ENCODE measurements at regions of chr3 and their contacts with region 1.

Region 1: DNA sequence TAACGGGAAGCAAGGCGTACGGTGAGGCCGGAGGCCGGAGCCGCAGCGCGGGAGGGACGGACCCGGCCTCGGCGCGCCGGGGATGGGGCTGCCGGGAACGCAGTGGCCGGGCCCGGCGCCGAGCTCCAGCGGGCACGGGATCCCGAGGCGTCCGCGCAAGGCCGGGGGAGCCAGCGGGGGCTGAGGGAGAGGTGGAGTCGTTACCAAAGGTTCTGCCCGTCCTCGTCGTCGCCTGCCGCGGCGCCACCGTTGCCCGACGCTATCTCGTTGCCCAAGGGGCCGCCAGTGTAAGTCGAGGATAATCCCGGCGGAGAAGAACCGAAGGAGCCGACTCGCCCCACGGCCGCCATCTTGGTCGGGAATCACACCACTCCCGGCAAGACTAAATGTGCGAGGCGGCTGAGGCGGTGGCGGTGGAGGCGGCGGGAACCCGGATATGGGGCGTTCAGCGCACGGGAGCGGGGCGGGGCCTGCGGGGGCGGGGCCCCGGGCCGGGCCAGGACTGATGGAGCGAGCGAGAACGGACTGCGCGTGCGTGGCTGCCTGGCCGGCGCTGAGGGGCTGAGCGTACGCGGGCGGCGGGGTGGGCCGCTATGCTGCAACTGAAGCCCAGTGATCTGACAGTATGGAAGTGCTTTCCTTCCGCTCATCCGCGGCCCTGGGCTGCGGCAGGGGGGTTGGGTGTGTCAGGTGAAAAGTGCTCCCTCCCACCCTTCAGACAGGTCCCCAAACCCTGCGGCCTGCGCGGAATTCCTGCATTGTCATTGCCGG is at the start of gene DYNC1LI1:
- DNase-seq: peak; percentile 80
- ATAC-seq: peak; percentile 91
- H3K4me3 ChIP-seq: peak within 1 kb of the TSS; percentile 90 to 99 (median 97)
- H3K27ac ChIP-seq: peak within 1 kb of the TSS; percentile 97
- H3K4me1 ChIP-seq: peaks cover 49% of the 10 kb centered on the region
- H3K27me3 ChIP-seq: no peaks in the 10 kb centered on the region
- CTCF ChIP-seq: no peak
- EP300 ChIP-seq: no peak
- POLR2A ChIP-seq: peak; percentile 76 to 93
- RAD21 ChIP-seq: peak; percentile 12; the same call in 1 of the 2 replicates
- total RNA-seq, gene DYNC1LI1: 37.1 and 51.6 TPM in 2 replicates

Region 2: DNA sequence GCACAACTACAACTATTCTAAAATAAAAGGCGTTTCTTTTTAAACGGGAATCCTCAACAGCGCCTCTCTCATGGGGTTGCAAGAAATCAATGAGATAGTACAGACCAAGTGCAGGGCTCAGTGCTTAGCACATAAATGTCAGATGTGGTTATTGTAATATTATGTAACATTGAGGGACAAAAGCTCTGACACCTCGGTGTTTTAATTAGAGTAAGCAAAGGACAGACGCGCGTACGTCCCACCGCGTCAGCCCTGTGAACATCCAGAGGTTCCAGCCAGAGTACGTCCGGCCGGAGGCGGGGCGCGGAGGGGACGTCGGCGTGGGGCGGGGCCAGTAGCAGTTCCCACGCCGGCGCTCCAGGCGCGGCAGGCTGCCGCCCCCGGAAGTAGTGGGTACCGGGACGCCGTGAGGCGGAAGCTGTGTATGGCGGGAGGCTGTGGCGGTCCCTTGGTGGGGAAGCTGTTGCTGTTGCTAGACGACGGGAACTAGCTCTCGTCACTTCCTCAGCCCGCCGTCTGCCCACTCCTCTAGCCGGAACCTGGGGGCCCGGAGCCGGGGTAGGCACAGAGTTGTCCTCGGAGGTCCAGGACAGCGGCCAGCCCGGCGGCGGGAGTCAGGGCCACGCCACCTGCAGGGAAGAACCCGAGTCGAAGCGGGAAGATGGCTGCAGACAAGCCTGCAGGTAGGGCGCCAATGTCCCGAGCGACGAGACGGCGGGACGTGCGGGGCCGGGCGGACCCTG is 114.4 kb after region 1 on chr3 and contains the start of gene CNOT10:
- CTCF ChIA-PET with region 1: no interaction called
- POLR2A ChIA-PET with region 1: interaction called, 7 read pairs
- in situ Hi-C with region 1: no loop called
- intact Hi-C with region 1: loop called (anchors 10 kb)
- DNase-seq: peak; percentile 93
- ATAC-seq: peak; percentile 98
- H3K4me3 ChIP-seq: peak within 1 kb of the TSS; percentile 72 to 90 (median 80)
- H3K27ac ChIP-seq: peak within 1 kb of the TSS; percentile 78
- H3K4me1 ChIP-seq: peaks cover 28% of the 10 kb centered on the region
- H3K27me3 ChIP-seq: no peaks in the 10 kb centered on the region
- CTCF ChIP-seq: peak; percentile 61
- EP300 ChIP-seq: no peak
- POLR2A ChIP-seq: peak in 1 of 2 experiments; percentile 80; a peak in 3 of 4 replicates
- RAD21 ChIP-seq: peak; percentile 39; the same call in 1 of the 2 replicates
- total RNA-seq, gene CNOT10: 34.1 and 39.0 TPM in 2 replicates

Region 3: GRCh38 chr3:32703491-32703972 is 132.9 kb after region 1 on chr3:
- CTCF ChIA-PET with region 1: no interaction called
- POLR2A ChIA-PET with region 1: no interaction called
- in situ Hi-C with region 1: no loop called
- intact Hi-C with region 1: loop called (anchors 1 kb)
- DNase-seq: peak; percentile 80
- ATAC-seq: peak; percentile 99
- H3K4me3 ChIP-seq: peak overlapping the region in 1 of 3 experiments; percentile 6; a peak in 2 of 6 replicates
- H3K27ac ChIP-seq: peak overlapping the region; percentile 84
- H3K4me1 ChIP-seq: peaks cover 13% of the 10 kb centered on the region
- H3K27me3 ChIP-seq: no peaks in the 10 kb centered on the region
- CTCF ChIP-seq: no peak
- EP300 ChIP-seq: peak in 1 of 2 experiments; percentile 26; a peak in 1 of 4 replicates
- POLR2A ChIP-seq: no peak; a peak in 1 of 4 replicates
- RAD21 ChIP-seq: no peak

Region 4: GRCh38 chr3:32733631-32734229 is 163.1 kb after region 1 on chr3:
- CTCF ChIA-PET with region 1: no interaction called
- POLR2A ChIA-PET with region 1: no interaction called
- in situ Hi-C with region 1: no loop called
- intact Hi-C with region 1: no loop called
- DNase-seq: peak; percentile 62
- ATAC-seq: peak; percentile 54; the same call in 2 of the 3 replicates
- H3K4me3 ChIP-seq: no peak overlapping the region
- H3K27ac ChIP-seq: no peak overlapping the region
- H3K4me1 ChIP-seq: no peaks in the 10 kb centered on the region
- H3K27me3 ChIP-seq: no peaks in the 10 kb centered on the region
- CTCF ChIP-seq: peak; percentile 73
- EP300 ChIP-seq: no peak
- POLR2A ChIP-seq: no peak
- RAD21 ChIP-seq: peak; percentile 50; the same call in 1 of the 2 replicates

Region 5: DNA sequence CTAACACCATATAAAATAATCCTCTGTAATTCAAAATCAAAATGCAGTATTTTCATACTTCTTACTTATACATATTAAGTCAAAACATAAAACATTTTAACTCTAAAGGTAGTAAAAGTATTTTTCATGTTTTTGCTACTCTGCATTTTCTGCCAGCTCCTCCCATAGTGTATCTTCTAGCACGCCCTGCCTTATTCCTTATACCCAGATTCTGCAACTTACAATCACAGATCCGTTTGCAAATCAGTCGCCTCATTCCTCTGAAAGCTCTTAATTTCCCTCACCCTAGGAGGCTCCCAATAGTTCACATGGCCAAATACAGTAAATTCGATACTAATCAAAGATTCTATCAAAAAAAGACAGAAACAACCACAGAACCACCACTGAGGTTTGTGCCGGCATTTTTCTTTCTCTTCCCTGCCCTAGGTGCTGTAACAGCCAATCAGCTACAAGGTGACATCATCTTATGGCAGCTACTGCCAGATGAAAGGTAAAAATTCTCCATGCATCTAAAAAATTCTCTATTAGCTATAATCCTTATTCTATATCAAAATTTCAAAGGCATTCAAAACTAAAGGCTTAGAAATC is 1074.5 kb after region 1 on chr3:
- CTCF ChIA-PET with region 1: no interaction called
- POLR2A ChIA-PET with region 1: no interaction called
- in situ Hi-C with region 1: no loop called
- intact Hi-C with region 1: loop called (anchors 10 kb)
- DNase-seq: no peak
- ATAC-seq: no peak
- H3K4me3 ChIP-seq: no peak overlapping the region
- H3K27ac ChIP-seq: no peak overlapping the region
- H3K4me1 ChIP-seq: no peaks in the 10 kb centered on the region
- H3K27me3 ChIP-seq: no peaks in the 10 kb centered on the region
- CTCF ChIP-seq: no peak
- EP300 ChIP-seq: no peak
- POLR2A ChIP-seq: no peak
- RAD21 ChIP-seq: no peak

Measured in HepG2 (cell line).